Ascending aorta (tissue), 2 donors: ENCODE measurements at regions of chr1 and their contacts with region 1.

Region 1: GRCh38 chr1:100351095-100351891 is 1.0 kb upstream of the CDC14A start:
- DNase-seq: peak; percentile 49 to 91
- H3K4me3 ChIP-seq: peak overlapping the region; percentile 82 to 86
- H3K27ac ChIP-seq: peak overlapping the region; percentile 85 to 86
- H3K4me1 ChIP-seq: peaks cover 0 to 17% of the 10 kb centered on the region in 2 donors
- H3K27me3 ChIP-seq: no peaks in the 10 kb centered on the region
- CTCF ChIP-seq: peak in 2 of 3 experiments; percentile 19 to 29

Region 2: DNA sequence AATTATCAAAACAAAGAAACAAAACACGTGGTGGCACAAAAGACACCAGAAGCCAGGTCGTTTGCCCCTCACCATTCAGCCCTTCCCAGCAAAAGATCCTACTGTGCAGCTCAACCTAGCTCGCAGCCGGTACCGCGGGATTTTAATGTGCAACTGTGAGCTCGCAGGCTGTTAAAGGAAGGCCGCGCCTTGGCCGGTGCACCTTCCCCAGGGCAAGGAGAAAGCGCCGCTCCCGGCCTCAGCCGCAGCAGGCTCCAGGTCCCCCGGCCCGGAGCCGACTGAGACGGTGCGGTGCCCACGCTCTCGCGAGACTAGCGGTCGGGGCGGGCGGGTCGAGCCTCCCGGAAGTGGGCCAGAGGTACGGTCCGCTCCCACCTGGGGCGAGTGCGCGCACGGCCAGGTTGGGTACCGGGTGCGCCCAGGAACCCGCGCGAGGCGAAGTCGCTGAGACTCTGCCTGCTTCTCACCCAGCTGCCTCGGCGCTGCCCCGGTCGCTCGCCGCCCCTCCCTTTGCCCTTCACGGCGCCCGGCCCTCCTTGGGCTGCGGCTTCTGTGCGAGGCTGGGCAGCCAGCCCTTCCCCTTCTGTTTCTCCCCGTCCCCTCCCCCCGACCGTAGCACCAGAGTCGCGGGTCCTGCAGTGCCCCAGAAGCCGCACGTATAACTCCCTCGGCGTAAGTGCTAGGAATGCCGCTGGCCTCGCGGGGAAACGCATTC is 501.4 kb before region 1 on chr1 and contains the start of gene AGL:
- intact Hi-C with region 1: loop called (anchors 5 kb)
- DNase-seq: peak; percentile 39 to 89
- H3K4me3 ChIP-seq: peak within 1 kb of the TSS; percentile 84 to 86
- H3K27ac ChIP-seq: peak within 1 kb of the TSS; percentile 89
- H3K4me1 ChIP-seq: peaks cover 4 to 6% of the 10 kb centered on the region in 2 donors
- H3K27me3 ChIP-seq: no peaks in the 10 kb centered on the region
- CTCF ChIP-seq: no peak
- total RNA-seq, gene AGL: 9.9 TPM

Region 3: GRCh38 chr1:100037927-100038659 is 313.2 kb before region 1 on chr1:
- intact Hi-C with region 1: loop called (anchors 5 kb)
- DNase-seq: peak; percentile 59 to 95
- H3K4me3 ChIP-seq: peak overlapping the region; percentile 93 to 94
- H3K27ac ChIP-seq: peak overlapping the region; percentile 97 to 98
- H3K4me1 ChIP-seq: peaks cover 4 to 9% of the 10 kb centered on the region in 2 donors
- H3K27me3 ChIP-seq: no peaks in the 10 kb centered on the region
- CTCF ChIP-seq: no peak

Region 4: DNA sequence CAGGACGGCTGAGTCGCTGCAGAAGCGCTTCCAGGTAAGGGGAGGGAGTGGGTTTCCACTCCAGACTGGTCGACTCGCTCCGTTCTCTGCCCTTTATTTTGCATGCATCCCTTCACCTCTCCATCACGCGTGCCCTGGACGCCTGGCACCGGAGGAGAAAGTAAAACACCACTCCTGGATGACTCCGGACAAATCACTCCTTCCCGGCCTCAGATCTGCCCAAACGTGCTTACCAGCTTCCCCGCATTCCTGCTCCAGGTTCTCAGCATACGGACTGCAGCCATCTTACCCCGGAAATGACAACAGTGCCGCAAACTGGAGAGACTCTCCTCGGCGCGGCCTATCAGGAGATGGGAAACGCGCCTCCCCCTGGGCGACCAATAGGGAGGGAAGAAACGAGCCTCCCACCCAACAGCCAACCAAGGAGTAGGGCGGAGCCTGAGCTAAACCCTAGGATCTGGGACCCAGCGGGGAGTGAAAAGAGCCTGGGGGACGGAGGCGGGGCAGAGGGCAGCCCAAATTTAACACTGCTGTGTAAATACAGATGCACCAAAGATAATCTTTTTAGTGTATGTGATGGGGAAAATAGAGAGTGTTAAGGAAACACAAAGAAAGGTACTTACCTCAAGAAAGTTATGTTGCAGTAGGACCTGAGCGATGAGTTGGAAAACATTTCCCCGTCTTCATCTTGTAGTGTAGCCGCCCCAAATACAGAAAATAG is 101.6 kb before region 1 on chr1 and contains the start of gene DBT:
- intact Hi-C with region 1: loop called (anchors 1 kb)
- DNase-seq: peak; percentile 86 to 98
- H3K4me3 ChIP-seq: peak within 1 kb of the TSS; percentile 57 to 85
- H3K27ac ChIP-seq: peak within 1 kb of the TSS; percentile 85 to 86
- H3K4me1 ChIP-seq: no peaks in the 10 kb centered on the region
- H3K27me3 ChIP-seq: no peaks in the 10 kb centered on the region
- CTCF ChIP-seq: no peak
- total RNA-seq, gene DBT: 2.3 TPM

Region 5: DNA sequence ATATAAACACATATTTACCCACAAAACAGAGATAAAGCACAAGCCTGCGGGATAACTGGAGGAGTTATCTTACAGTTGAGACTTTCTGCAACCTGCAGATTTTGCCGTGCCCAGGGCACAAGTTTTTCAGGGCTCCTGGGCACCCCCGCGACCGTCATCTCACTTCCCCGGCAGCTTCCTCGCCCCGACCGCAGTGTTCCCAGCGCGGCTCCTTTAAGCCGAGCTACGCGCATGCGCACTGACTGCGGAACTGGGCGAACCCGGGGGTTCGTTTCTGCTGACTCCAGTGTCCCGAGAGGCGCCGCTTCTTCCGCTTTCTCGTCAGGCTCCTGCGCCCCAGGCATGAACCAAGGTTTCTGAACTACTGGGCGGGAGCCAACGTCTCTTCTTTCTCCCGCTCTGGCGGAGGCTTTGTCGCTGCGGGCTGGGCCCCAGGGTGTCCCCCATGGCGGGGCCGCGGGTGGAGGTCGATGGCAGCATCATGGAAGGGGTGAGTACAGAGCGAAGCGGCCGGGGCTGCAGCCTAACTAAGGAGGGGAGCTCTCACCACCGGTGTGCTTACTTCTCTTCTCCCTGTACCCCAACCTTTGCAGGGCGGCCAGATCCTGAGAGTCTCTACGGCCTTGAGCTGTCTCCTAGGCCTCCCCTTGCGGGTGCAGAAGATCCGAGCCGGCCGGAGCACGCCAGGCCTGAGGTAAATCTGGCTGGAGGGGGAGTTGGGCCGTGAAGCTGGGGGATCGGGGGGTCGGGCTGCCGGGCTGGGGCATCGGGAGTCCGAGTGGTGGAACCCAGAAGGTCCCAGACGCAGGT is 85.2 kb before region 1 on chr1 and contains the start of gene RTCA:
- intact Hi-C with region 1: loop called (anchors 1 kb)
- DNase-seq: peak; percentile 84 to 98
- H3K4me3 ChIP-seq: peak within 1 kb of the TSS; percentile 92 to 98
- H3K27ac ChIP-seq: peak within 1 kb of the TSS; percentile 76 to 84
- H3K4me1 ChIP-seq: peaks cover 3 to 17% of the 10 kb centered on the region in 2 donors
- H3K27me3 ChIP-seq: no peaks in the 10 kb centered on the region
- CTCF ChIP-seq: no peak
- total RNA-seq, gene RTCA: 2.8 TPM

Region 6: GRCh38 chr1:100377590-100378361 is 26.5 kb after region 1 on chr1:
- intact Hi-C with region 1: no loop called
- DNase-seq: no peak
- H3K4me3 ChIP-seq: no peak overlapping the region
- H3K27ac ChIP-seq: no peak overlapping the region
- H3K4me1 ChIP-seq: no peaks in the 10 kb centered on the region
- H3K27me3 ChIP-seq: no peaks in the 10 kb centered on the region
- CTCF ChIP-seq: no peak

Region 7: GRCh38 chr1:100719490-100719889 is 368.2 kb after region 1 on chr1 and contains the start of gene VCAM1:
- intact Hi-C with region 1: loop called (anchors 5 kb)
- DNase-seq: no peak
- H3K4me3 ChIP-seq: peak within 1 kb of the TSS; percentile 41 to 46
- H3K27ac ChIP-seq: peak within 1 kb of the TSS in 1 of 2 donors; percentile 17
- H3K4me1 ChIP-seq: no peaks in the 10 kb centered on the region
- H3K27me3 ChIP-seq: no peaks in the 10 kb centered on the region
- CTCF ChIP-seq: no peak
- total RNA-seq, gene VCAM1: 9.8 TPM

Region 8: DNA sequence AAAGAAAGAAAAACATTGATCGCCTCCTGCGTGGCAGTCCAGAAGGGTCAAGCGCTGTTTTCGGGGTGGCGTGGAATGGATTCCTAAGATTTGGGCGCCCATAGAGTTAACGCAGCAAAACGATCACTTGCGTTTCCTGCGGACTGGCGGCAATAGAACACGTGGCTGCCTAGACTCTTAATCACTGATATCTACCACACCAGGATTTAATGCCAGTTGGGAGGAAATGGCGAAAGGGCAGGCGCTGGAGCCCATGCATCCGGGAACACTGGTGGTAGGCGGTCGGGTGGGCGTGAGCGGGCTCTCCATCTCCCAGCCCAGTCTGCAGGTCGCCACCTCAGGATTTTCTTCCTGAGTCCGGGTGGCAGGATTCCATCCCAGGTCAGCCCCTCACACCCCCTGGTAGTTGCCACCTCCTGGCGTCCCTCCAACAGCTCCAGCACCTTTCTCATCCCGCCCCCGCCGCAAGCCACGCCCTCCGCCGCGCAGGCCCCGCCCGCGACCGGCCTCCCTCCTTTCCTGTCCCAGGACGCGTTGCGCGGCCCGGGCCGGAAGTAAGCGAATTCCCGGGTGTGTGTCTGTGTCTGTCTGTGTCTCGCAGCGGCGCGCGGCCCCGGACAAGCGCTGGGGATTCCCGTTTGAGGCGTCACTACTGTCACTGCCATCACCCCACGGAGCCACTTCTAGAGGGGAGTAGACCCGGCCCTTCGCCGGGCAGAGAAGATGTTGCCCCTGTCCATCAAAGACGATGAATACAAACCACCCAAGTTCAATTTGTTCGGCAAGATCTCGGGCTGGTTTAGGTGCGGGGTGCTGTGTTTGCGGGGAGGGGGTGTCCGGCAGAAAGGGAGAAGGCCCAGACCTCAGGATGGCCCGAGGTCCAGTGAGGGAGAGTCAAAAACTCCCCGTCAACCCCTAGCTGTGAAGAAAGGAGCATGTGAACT is 544.5 kb after region 1 on chr1 and contains the start of gene SLC30A7:
- intact Hi-C with region 1: loop called (anchors 5 kb)
- DNase-seq: peak; percentile 84 to 97
- H3K4me3 ChIP-seq: peak within 1 kb of the TSS; percentile 77 to 79
- H3K27ac ChIP-seq: peak within 1 kb of the TSS; percentile 96 to 97
- H3K4me1 ChIP-seq: peaks cover 0 to 13% of the 10 kb centered on the region in 2 donors
- H3K27me3 ChIP-seq: no peaks in the 10 kb centered on the region
- CTCF ChIP-seq: no peak
- total RNA-seq, gene SLC30A7: 12.1 TPM

Region 9: GRCh38 chr1:101105877-101106276 is 754.6 kb after region 1 on chr1:
- intact Hi-C with region 1: no loop called
- DNase-seq: no peak
- H3K4me3 ChIP-seq: no peak overlapping the region
- H3K27ac ChIP-seq: no peak overlapping the region
- H3K4me1 ChIP-seq: no peaks in the 10 kb centered on the region
- H3K27me3 ChIP-seq: no peaks in the 10 kb centered on the region
- CTCF ChIP-seq: no peak